ENCODE measurements at regions of chr1 and their contacts with region 1.

Region 1: GRCh38 chr1:110460253-110461220 is 9.6 kb downstream of the PROK1 start:
- H3K4me3 ChIP-seq: no peak overlapping the region
- H3K27ac ChIP-seq: no peak overlapping the region
- H3K4me1 ChIP-seq: no peaks in the 10 kb centered on the region
- CTCF ChIP-seq: peak; percentile 81

Region 2: GRCh38 chr1:110087812-110088738 is 372.5 kb before region 1 on chr1:
- CTCF ChIA-PET with region 1: interaction called, 12 read pairs
- POLR2A ChIA-PET with region 1: no interaction called
- H3K4me3 ChIP-seq: no peak overlapping the region
- H3K27ac ChIP-seq: no peak overlapping the region
- H3K4me1 ChIP-seq: no peaks in the 10 kb centered on the region
- CTCF ChIP-seq: peak; percentile 40; the same call in 1 of the 2 replicates

Region 3: DNA sequence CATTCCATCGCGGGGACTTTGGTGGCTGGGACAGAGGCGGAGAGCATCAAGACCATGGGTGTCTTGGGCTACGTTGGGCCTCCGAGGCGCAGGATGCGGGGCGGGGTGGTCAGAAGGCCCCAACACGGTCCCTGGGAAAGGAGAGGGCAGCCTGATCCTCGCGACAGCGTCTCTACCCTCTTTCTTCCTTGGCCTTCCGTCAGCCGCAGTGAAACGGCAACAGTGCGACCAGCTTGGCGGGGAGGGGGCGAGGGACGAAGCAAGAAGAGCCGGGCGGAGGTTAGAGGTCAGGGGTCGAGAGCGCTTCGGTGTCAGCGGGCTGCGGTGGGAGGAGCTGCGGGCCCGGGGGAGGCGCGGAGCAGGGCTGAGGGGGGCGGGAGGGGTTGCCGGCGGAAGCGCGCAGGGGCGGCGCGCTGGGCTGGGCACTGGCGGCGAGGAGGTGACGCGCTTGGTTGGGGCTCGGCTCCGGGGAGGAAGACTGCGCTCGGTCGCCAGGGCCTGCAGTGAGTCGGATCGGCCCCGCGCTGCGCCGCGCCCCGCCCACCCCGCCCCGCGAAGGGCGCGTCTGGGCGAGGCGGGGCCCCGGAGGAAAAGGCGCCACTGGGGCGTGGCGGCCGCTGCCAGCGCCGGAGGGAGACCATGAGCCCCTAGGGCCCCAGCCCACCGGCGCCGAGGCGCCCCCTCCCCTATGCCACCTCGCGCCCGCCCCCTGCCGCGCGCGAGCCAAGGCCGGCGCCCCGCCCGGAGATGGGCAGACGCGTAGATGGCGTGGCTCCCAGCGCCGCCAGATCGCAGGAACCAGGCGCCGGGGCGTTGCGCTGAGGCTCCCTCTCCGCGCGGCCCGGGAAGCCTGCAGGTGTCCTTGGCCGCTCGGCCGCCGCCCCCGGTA is 250.6 kb before region 1 on chr1 and contains the start of gene KCNC4:
- CTCF ChIA-PET with region 1: interaction called, 357 read pairs
- POLR2A ChIA-PET with region 1: interaction called, 4 read pairs
- H3K4me3 ChIP-seq: peak within 1 kb of the TSS; percentile 56
- H3K27ac ChIP-seq: peak within 1 kb of the TSS; percentile 78
- H3K4me1 ChIP-seq: peaks cover 7% of the 10 kb centered on the region
- CTCF ChIP-seq: no peak

Region 4: GRCh38 chr1:110338886-110339406 is 121.6 kb before region 1 on chr1 and contains the start of gene RBM15:
- CTCF ChIA-PET with region 1: interaction called, 9 read pairs
- POLR2A ChIA-PET with region 1: interaction called, 10 read pairs
- H3K4me3 ChIP-seq: peak within 1 kb of the TSS; percentile 78
- H3K27ac ChIP-seq: peak within 1 kb of the TSS; percentile 88
- H3K4me1 ChIP-seq: peaks cover 13% of the 10 kb centered on the region
- CTCF ChIP-seq: no peak

Region 5: DNA sequence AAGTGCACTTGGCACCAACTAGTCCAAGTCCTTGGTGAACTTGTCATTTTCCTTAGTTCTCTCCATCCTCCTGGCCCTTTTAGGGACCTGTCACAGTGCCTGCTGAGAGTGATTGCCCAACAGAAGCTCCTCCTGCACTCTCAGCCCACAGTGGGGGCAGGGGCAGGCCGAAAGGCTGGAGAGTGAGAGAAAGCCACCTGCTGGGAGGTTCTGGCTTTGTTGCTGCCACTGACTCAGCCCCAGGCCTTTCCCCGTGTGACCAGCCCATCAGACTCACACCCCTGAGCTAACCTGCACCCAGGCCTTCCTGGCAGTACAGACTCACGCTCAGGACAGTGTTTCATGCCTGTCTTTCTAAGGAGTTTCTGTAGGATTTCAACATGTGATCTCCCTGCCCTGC is 26.7 kb before region 1 on chr1:
- CTCF ChIA-PET with region 1: interaction called, 20 read pairs
- POLR2A ChIA-PET with region 1: interaction called, 3 read pairs
- H3K4me3 ChIP-seq: no peak overlapping the region
- H3K27ac ChIP-seq: no peak overlapping the region
- H3K4me1 ChIP-seq: no peaks in the 10 kb centered on the region
- CTCF ChIP-seq: no peak; the same call in 1 of the 2 replicates

Region 6: DNA sequence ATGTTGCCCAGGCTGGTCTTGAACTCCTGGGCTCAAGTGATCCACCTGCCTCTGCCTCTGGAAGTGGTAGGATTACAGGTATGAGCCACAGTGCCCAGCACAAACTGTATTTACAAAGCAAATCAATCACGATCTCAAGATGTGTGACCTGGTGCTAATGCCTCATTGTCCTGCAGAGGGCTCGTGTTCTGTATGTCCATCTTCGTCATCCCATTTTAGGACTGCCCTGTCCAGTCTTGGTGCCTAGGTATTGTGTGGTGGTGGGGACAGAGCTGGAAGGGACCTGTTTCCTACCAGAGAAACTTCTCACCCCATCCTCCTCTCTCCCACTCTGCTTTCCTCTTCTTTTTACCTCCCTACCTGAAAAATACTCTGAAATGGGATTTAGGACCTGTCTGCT is 10.6 kb after region 1 on chr1:
- CTCF ChIA-PET with region 1: interaction called, 12 read pairs
- POLR2A ChIA-PET with region 1: no interaction called
- H3K4me3 ChIP-seq: no peak overlapping the region
- H3K27ac ChIP-seq: no peak overlapping the region
- H3K4me1 ChIP-seq: 0 out of 2 replicates have a peak, but pooled peaks cover 1% of the 10 kb centered on the region
- CTCF ChIP-seq: 0 out of 2 replicates have a peak, but pooled peaks have one; percentile 11

Measured in HEK293 (cell line).